Panc1 (cell line): ENCODE measurements at regions of chrX and their contacts with region 1.

Region 1: DNA sequence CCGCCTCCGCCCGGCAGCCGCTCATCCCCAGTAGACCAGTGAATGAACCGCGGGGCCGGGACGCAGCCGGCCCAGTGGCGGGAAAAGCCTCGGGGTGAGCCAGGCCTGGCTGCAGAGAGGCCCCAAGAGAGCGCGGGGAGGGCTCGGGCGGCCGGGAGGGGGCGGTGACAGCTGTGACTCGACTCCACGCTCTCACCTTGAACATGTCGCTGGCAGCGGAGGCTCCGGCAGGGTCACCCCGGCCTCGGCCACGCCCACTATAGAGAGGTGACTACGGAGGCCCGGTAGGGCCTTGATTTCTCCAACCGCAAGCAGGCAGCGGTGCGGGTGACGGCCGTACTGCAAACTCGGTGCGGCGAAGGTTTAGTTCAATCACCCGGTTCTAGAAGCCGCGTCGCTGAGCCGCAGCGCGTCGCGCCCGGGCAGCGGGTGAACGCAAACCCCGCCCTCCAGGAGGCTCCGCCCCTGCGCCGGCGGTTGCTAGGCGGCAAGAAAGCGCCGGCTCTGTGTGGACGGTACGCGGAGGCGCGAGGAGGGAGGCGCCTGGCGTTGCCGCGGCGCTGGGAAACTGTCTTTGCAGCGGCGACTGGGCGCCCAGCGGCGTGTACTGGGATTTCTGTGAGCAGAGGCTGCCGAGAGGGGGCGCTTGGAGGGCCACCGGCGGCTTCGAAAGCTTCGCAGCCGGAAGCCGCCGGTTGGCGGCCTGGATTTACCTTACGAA is at the starts of genes APOO and CXorf58:
- DNase-seq: no peak
- ATAC-seq: peak; percentile 98
- H3K4me3 ChIP-seq: peak within 1 kb of the TSS; percentile 56 to 63
- H3K27ac ChIP-seq: peak within 1 kb of the TSS; percentile 84
- H3K4me1 ChIP-seq: peaks cover 3% of the 10 kb centered on the region
- H3K27me3 ChIP-seq: no peaks in the 10 kb centered on the region
- CTCF ChIP-seq: peak; percentile 87
- total RNA-seq, gene APOO: 36.8 TPM
- total RNA-seq, gene CXorf58: 0.41 TPM

Region 2: GRCh38 chrX:23694606-23695005 is 213.1 kb before region 1 on chrX:
- CTCF ChIA-PET with region 1: no interaction called
- POLR2A ChIA-PET with region 1: interaction called, 18 read pairs
- in situ Hi-C with region 1: no loop called
- intact Hi-C with region 1: loop called (anchors 2 kb)
- DNase-seq: peak; percentile 2
- ATAC-seq: peak; percentile 78
- H3K4me3 ChIP-seq: no peak overlapping the region
- H3K27ac ChIP-seq: no peak overlapping the region
- H3K4me1 ChIP-seq: no peaks in the 10 kb centered on the region
- H3K27me3 ChIP-seq: no peaks in the 10 kb centered on the region
- CTCF ChIP-seq: peak; percentile 66

Region 3: GRCh38 chrX:23756157-23756559 is 151.5 kb before region 1 on chrX:
- CTCF ChIA-PET with region 1: no interaction called
- POLR2A ChIA-PET with region 1: no interaction called
- in situ Hi-C with region 1: no loop called
- intact Hi-C with region 1: loop called (anchors 10 kb)
- DNase-seq: no peak
- ATAC-seq: no peak
- H3K4me3 ChIP-seq: no peak overlapping the region
- H3K27ac ChIP-seq: no peak overlapping the region
- H3K4me1 ChIP-seq: no peaks in the 10 kb centered on the region
- H3K27me3 ChIP-seq: no peaks in the 10 kb centered on the region
- CTCF ChIP-seq: peak; percentile 78

Region 4: GRCh38 chrX:23883737-23884354 is 23.8 kb before region 1 on chrX:
- CTCF ChIA-PET with region 1: no interaction called
- POLR2A ChIA-PET with region 1: interaction called, 14 read pairs
- in situ Hi-C with region 1: no loop called
- intact Hi-C with region 1: no loop called
- DNase-seq: no peak
- ATAC-seq: peak; percentile 93
- H3K4me3 ChIP-seq: peak overlapping the region; percentile 16 to 29; a peak in 3 of 4 replicates
- H3K27ac ChIP-seq: peak overlapping the region; percentile 86
- H3K4me1 ChIP-seq: peaks cover 17% of the 10 kb centered on the region
- H3K27me3 ChIP-seq: no peaks in the 10 kb centered on the region
- CTCF ChIP-seq: no peak